ENCODE measurements at regions of chr19 and their contacts with region 1.

Region 1: DNA sequence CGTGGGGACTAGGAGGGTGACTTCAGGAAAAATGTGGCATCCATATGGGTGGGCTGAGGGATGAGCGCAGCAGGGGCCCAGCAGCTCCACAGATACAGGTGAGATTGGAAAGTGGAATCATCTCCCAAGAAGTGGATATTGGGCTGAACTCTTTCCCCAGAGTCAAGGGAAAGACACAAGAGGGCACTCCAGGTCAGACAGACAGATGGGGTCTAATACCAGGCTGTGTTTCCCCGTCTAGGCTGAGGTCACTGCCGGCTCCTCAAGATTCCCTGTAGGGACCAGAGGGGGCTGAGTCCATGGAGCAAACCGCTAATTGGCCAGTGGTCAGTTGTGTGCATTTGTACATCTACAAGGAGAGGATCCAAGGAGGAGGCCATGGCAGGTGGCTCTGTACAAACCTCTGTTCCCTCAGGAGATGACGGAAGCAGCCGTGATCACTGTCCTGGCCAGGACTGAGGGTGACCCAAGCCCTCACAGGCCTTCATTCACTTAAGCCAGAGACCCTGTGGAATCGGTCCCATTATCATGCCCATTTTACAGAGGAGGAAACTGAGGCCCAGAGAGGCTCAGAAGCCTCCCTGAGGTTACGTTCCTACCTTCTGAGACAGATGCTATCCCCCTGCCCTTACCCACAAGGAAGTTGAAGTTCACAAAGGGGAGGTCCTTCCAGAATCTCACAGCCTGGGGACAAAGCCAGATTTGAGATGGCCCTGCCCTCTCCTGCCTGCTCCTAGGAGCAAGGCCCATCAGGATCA is 14.9 kb upstream of the IGLON5 start:
- DNase-seq: peak in 1 of 2 experiments; percentile 57
- H3K4me3 ChIP-seq: no peak overlapping the region
- H3K27ac ChIP-seq: no peak overlapping the region
- H3K4me1 ChIP-seq: peaks cover 10 to 39% (median 29%) of the 10 kb centered on the region in 4 experiments
- H3K27me3 ChIP-seq: peaks cover 0 to 2% (median 0%) of the 10 kb centered on the region in 4 experiments; a peak in 1 of 7 replicates
- CTCF ChIP-seq: peak; percentile 18 to 68 (median 60)
- EP300 ChIP-seq: no peak
- POLR2A ChIP-seq: no peak
- RAD21 ChIP-seq: peak; percentile 82 to 89

Region 2: GRCh38 chr19:51034718-51035117 is 261.8 kb before region 1 on chr19 and contains the start of gene KLK12:
- CTCF ChIA-PET with region 1: no interaction called
- POLR2A ChIA-PET with region 1: no interaction called
- DNase-seq: no peak
- H3K4me3 ChIP-seq: no peak within 1 kb of the TSS
- H3K27ac ChIP-seq: no peak within 1 kb of the TSS
- H3K4me1 ChIP-seq: peaks cover 0 to 3% (median 1%) of the 10 kb centered on the region in 4 experiments; a peak in 2 of 7 replicates
- H3K27me3 ChIP-seq: no peaks in the 10 kb centered on the region
- CTCF ChIP-seq: no peak
- EP300 ChIP-seq: no peak
- POLR2A ChIP-seq: no peak
- RAD21 ChIP-seq: no peak
- total RNA-seq, gene KLK12: not detected in 2 replicates

Region 3: DNA sequence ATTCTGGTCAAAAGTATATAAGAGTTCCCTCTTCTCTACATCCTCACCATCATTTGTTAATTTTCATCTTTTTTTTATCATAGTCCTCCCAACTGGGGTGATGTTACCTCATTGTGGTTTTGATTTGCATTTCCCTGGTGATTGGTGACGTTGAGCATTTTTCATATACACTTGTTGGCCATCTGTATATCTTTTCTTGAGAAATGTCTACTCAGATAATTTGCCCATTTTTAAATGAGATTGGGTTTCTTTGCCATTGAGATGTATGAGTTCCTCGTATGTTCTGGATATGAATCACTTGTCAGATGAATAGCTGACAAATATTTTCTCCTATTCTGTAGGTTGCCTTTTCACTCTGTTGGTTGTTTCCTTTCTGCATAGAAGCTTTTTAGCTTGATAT is 69.2 kb before region 1 on chr19:
- CTCF ChIA-PET with region 1: no interaction called
- POLR2A ChIA-PET with region 1: no interaction called
- DNase-seq: no peak
- H3K4me3 ChIP-seq: no peak overlapping the region
- H3K27ac ChIP-seq: no peak overlapping the region
- H3K4me1 ChIP-seq: no peaks in the 10 kb centered on the region
- H3K27me3 ChIP-seq: no peaks in the 10 kb centered on the region; a peak in 1 of 7 replicates
- CTCF ChIP-seq: no peak
- EP300 ChIP-seq: no peak
- POLR2A ChIP-seq: no peak
- RAD21 ChIP-seq: no peak

Region 4: GRCh38 chr19:51259348-51260245 is 36.9 kb before region 1 on chr19:
- CTCF ChIA-PET with region 1: interaction called, 11 read pairs
- POLR2A ChIA-PET with region 1: no interaction called
- DNase-seq: peak; percentile 15 to 69
- H3K4me3 ChIP-seq: peak overlapping the region in 1 of 4 experiments; percentile 27; a peak in 1 of 8 replicates
- H3K27ac ChIP-seq: no peak overlapping the region
- H3K4me1 ChIP-seq: peaks cover 0 to 6% (median 5%) of the 10 kb centered on the region in 4 experiments; a peak in 4 of 7 replicates
- H3K27me3 ChIP-seq: no peaks in the 10 kb centered on the region
- CTCF ChIP-seq: peak; percentile 66 to 87 (median 82)
- EP300 ChIP-seq: no peak
- POLR2A ChIP-seq: no peak
- RAD21 ChIP-seq: peak; percentile 82 to 85

Region 5: DNA sequence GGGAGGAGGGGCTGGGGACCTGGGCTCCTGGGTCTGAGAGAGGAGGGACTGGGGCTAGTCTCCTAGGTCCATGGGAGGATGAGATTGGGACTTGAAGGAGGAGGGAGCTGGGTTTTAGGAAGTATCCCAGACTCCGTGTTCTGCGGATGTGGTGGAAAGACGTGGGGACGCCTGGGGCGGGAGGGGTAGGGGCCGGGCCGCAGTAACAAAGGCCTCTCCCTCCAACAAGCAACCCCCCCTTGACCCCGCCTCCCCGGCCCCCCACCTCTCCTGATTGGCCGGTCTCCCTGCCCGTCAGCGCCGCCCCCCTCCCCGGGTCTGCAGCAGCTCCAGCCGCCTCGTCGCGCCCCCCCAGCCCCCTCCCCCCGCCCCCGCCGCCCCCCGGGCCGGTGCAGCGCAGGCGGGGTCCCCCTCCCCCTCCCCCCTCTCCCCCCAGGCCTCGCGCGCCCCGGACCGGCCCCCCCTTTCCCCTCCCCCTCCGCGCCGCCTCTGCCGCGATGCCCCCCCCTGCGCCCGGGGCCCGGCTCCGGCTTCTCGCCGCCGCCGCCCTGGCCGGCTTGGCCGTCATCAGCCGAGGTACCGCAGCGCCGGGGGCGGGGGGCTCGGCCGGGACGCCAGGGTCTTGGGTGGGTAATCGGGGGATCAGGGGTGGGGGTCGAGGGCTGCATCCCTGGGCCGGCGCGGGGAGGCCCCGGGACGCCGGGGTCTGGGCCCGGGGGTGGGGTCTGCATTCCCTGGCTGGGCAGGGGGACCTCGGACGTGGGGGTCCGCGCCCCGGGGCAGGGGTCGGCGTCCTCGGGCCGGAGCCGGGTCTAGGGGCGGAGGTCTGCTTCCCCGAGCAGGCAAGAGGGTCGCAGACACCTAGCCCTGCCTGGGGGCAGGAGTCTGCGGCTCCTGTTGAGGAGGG is 15.1 kb after region 1 on chr19 and contains the start of gene IGLON5:
- CTCF ChIA-PET with region 1: interaction called, 11 read pairs
- POLR2A ChIA-PET with region 1: interaction called, 5 read pairs
- DNase-seq: no peak
- H3K4me3 ChIP-seq: peak within 1 kb of the TSS; percentile 42 to 77 (median 56)
- H3K27ac ChIP-seq: no peak within 1 kb of the TSS
- H3K4me1 ChIP-seq: peaks cover 3 to 9% (median 6%) of the 10 kb centered on the region in 4 experiments; a peak in 5 of 7 replicates
- H3K27me3 ChIP-seq: no peaks in the 10 kb centered on the region; a peak in 2 of 7 replicates
- CTCF ChIP-seq: no peak
- EP300 ChIP-seq: no peak
- POLR2A ChIP-seq: no peak
- RAD21 ChIP-seq: no peak
- total RNA-seq, gene IGLON5: 31.8 and 34.1 TPM in 2 replicates

Region 6: GRCh38 chr19:51407511-51408131 is 111.1 kb after region 1 on chr19:
- CTCF ChIA-PET with region 1: interaction called, 11 read pairs
- POLR2A ChIA-PET with region 1: no interaction called
- DNase-seq: no peak
- H3K4me3 ChIP-seq: no peak overlapping the region
- H3K27ac ChIP-seq: no peak overlapping the region
- H3K4me1 ChIP-seq: peaks cover 0 to 13% (median 4%) of the 10 kb centered on the region in 4 experiments; a peak in 6 of 7 replicates
- H3K27me3 ChIP-seq: no peaks in the 10 kb centered on the region
- CTCF ChIP-seq: peak; percentile 7 to 77 (median 64)
- EP300 ChIP-seq: no peak
- POLR2A ChIP-seq: no peak
- RAD21 ChIP-seq: peak; percentile 54 to 69